ENCODE measurements at regions of chr6 and their contacts with region 1.

Region 1: GRCh38 chr6:30489081-30490025 is at the start of gene HLA-E:
- DNase-seq: peak; percentile 99
- H3K4me3 ChIP-seq: peak within 1 kb of the TSS; percentile 78 to 98 (median 90)
- H3K27ac ChIP-seq: peak within 1 kb of the TSS; percentile 98 to 100 (median 100)
- H3K4me1 ChIP-seq: peaks cover 0 to 34% (median 26%) of the 10 kb centered on the region in 4 donors
- H3K27me3 ChIP-seq: no peaks in the 10 kb centered on the region
- CTCF ChIP-seq: no peak
- EP300 ChIP-seq: peak in 2 of 4 donors; percentile 71 to 95
- POLR2A ChIP-seq: peak; percentile 98 to 99
- total RNA-seq, gene HLA-E: 323 to 462 (median 387) TPM

Region 2: GRCh38 chr6:30515932-30516753 is 26.8 kb after region 1 on chr6:
- intact Hi-C with region 1: loop called (anchors 2 kb)
- DNase-seq: peak; percentile 95
- H3K4me3 ChIP-seq: peak overlapping the region; percentile 21 to 54 (median 51)
- H3K27ac ChIP-seq: peak overlapping the region; percentile 81 to 89 (median 85)
- H3K4me1 ChIP-seq: peaks cover 0 to 19% (median 18%) of the 10 kb centered on the region in 4 donors
- H3K27me3 ChIP-seq: no peaks in the 10 kb centered on the region
- CTCF ChIP-seq: no peak
- EP300 ChIP-seq: peak in 1 of 4 donors; percentile 73
- POLR2A ChIP-seq: no peak

Region 3: GRCh38 chr6:30590994-30591393 is 101.6 kb after region 1 on chr6:
- intact Hi-C with region 1: no loop called
- DNase-seq: no peak
- H3K4me3 ChIP-seq: no peak overlapping the region
- H3K27ac ChIP-seq: peak overlapping the region in 3 of 4 donors; percentile 18 to 55 (median 23)
- H3K4me1 ChIP-seq: no peaks in the 10 kb centered on the region
- H3K27me3 ChIP-seq: no peaks in the 10 kb centered on the region
- CTCF ChIP-seq: no peak
- EP300 ChIP-seq: no peak
- POLR2A ChIP-seq: no peak

Region 4: GRCh38 chr6:30672445-30673253 is 183.3 kb after region 1 on chr6 and contains the start of gene DHX16:
- intact Hi-C with region 1: loop called (anchors 5 kb)
- DNase-seq: peak; percentile 98
- H3K4me3 ChIP-seq: peak within 1 kb of the TSS; percentile 69 to 93 (median 80)
- H3K27ac ChIP-seq: peak within 1 kb of the TSS; percentile 81 to 92 (median 88)
- H3K4me1 ChIP-seq: peaks cover 0 to 25% (median 22%) of the 10 kb centered on the region in 4 donors
- H3K27me3 ChIP-seq: no peaks in the 10 kb centered on the region
- CTCF ChIP-seq: peak; percentile 69 to 91 (median 78)
- EP300 ChIP-seq: no peak
- POLR2A ChIP-seq: peak; percentile 6 to 61
- total RNA-seq, gene DHX16: 18.0 to 22.8 (median 21.3) TPM

Measured in sigmoid colon (tissue), 7 donors.